ENCODE measurements at regions of chr14 and their contacts with region 1.

Region 1: DNA sequence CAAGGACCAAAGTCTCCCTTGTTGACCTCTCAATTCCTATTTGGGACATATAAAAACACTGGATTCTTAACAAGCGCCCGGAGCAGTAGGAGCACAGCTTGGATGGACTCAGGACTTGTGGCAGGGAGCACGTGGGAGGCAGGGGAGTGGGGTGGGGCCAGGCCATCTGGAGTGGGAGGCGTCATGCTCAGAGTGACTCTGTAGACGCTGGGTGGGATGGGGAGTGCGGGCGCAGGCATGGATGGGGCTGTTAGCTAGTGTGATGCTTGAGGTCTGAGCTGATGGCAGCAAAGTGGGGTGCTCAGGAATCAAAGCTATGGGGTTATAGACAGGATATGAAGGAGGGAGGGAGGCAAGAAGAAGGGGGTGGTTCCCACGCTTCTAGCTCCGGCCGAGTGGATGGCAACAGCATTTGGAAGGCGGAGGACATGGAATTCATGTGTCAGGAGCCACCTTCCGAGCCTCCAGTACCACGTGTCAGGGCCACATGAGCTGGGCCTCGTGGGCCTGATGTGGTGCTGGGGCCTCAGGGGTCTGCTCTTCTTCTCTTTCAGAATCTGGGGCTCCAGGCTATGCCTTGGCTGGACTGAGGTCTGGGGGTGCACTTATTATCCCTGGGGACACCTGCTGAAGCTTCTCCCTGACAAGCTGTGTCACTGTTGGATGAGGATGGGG is 26.2 kb downstream of the MEG3 start:
- DNase-seq: no peak
- CTCF ChIP-seq: no peak

Region 2: GRCh38 chr14:100803226-100803625 is 48.9 kb before region 1 on chr14:
- CTCF ChIA-PET with region 1: no interaction called
- POLR2A ChIA-PET with region 1: no interaction called
- DNase-seq: no peak
- CTCF ChIP-seq: no peak

Region 3: DNA sequence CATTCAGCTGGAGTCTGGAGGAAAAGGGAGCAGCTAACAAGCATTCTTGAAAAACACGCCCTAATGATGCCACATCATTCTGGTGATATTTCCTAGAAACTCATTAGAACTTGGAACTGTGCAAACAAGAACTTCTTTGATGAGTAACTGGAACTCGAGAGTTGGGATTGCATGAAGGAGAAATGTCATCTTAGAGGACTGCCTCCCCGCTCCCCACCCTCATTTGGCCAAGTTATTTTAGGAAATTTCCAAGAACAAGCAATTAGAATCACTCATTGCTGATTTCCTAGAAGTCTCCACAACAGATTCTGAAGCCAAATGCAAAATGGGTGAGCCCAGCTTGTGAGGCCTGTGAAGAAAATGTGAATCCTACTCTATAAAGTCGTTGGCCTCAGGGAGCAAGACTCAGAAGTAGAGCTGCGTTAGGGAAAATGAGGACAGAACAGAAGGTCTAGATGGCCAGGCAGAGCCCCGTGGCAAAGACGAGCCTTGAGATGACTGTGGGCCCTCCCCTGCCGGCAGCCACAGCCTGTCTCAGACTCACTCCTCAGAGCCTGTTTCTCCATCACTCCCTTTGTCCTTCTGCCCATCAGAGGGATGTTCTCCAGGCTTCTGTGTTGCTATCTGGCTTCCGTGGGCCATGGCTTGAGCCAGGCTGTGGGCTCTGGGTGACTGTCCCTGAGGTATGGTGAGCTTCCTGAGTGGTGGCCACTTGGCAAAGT is 13.0 kb after region 1 on chr14:
- CTCF ChIA-PET with region 1: interaction called, 15 read pairs
- POLR2A ChIA-PET with region 1: no interaction called
- DNase-seq: no peak
- CTCF ChIP-seq: no peak